Esophagus muscularis mucosa (tissue), 4 donors: ENCODE measurements at regions of chr2 and their contacts with region 1.

Region 1: DNA sequence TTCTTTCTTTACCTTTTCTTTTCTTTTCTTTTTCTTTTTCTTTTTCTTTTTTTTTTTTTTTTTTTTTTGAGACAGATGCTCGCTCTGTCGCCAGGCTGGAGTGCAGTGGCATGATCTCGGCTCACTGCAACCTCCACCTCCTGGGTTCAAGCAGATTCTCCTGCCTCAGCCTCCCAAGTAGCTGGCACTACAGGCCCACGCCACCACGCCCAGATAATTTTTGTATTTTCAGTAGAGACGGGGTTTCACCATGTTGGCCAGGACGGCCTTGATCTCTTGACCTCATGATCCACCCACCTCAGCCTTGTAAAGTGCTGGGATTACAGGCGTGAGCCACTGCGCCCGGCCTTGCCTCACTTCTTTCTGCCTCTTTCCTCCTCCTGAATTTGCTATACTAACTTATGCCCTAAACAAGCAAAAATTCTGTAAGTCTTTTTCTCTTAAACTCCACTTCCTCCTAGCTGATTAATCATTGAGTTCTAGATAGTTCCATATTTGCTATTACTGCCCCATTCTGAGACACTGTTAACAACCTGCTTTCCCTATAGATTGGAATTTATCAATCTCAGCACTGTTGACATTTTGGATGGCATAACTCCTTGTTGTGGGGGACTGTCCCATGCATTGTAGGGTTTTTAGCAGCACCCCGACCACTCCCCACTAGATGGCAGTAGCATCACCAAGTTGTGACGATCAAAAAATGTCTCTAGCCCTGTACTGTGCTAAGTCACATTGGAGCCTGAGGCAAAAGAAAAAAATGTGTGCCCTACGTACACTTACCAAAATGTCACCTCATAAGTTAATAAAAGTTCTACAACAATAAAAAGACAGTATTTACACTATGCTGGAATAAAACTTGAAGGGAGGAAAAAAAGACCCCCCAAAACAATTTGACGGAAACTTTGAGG is 16.4 kb upstream of the THADA start:
- DNase-seq: no peak
- H3K4me3 ChIP-seq: peak overlapping the region in 1 of 4 donors; percentile 4
- H3K27ac ChIP-seq: no peak overlapping the region
- H3K4me1 ChIP-seq: peaks cover 0 to 8% (median 2%) of the 10 kb centered on the region in 4 donors
- H3K27me3 ChIP-seq: no peaks in the 10 kb centered on the region
- CTCF ChIP-seq: peak; percentile 79 to 89 (median 79)
- EP300 ChIP-seq: no peak
- POLR2A ChIP-seq: no peak

Region 2: DNA sequence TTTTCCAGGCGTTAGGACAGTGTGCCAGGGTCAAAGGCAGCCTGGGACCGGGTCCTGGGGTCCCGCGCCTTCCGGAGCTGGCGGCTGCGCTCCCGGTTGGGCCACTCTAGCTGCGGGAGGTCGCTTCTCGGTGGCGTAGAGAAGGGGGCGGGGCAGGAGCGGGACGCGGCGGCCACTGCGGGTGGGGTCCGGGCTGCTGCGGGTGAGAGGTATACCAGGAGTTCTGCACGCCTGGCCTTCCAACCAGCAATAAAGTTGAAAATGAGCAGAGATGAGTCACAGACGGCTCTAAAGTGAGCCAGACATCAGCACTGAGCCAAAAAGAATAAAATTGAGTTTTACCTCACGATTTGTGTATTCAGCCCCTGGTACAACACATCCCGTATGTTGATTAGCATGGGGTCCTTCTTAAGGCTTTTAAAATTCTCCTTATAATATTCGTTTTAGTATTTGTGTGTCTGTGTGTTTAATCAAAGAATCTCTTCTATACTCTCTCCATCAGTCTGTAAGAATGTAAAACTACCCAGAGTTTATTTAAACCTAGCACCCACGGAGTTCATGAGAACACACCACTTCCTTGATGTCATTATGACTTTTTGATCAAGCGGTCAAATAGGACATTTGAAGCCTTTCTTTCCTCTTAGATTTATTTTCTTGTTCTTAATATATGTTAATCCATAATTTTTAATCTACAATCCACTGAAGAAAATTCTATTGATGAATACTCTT is 64.2 kb after region 1 on chr2 and contains the start of gene C1GALT1C1L:
- intact Hi-C with region 1: loop called (anchors 10 kb)
- DNase-seq: no peak
- H3K4me3 ChIP-seq: peak within 1 kb of the TSS; percentile 59 to 75 (median 60)
- H3K27ac ChIP-seq: peak within 1 kb of the TSS; percentile 28 to 70 (median 46)
- H3K4me1 ChIP-seq: peaks cover 0 to 6% (median 5%) of the 10 kb centered on the region in 4 donors
- H3K27me3 ChIP-seq: no peaks in the 10 kb centered on the region
- CTCF ChIP-seq: no peak
- EP300 ChIP-seq: no peak
- POLR2A ChIP-seq: no peak
- total RNA-seq, gene C1GALT1C1L: 0.52 to 0.83 (median 0.73) TPM

Region 3: GRCh38 chr2:43773876-43774613 is 161.8 kb after region 1 on chr2 and contains the start of gene DYNC2LI1:
- intact Hi-C with region 1: loop called (anchors 5 kb)
- DNase-seq: peak; percentile 97
- H3K4me3 ChIP-seq: peak within 1 kb of the TSS; percentile 69 to 74 (median 70)
- H3K27ac ChIP-seq: peak within 1 kb of the TSS; percentile 81 to 90 (median 86)
- H3K4me1 ChIP-seq: peaks cover 7 to 13% (median 10%) of the 10 kb centered on the region in 4 donors
- H3K27me3 ChIP-seq: no peaks in the 10 kb centered on the region
- CTCF ChIP-seq: no peak
- EP300 ChIP-seq: no peak
- POLR2A ChIP-seq: no peak
- total RNA-seq, gene DYNC2LI1: 15.6 to 19.1 (median 17.7) TPM